ENCODE measurements at regions of chr1 and their contacts with region 1.

Region 1: GRCh38 chr1:198657550-198658064 is 18.8 kb downstream of the PTPRC start:
- DNase-seq: no peak
- H3K4me3 Mint-ChIP-seq: peak overlapping the region; percentile 65
- H3K27ac Mint-ChIP-seq: peak overlapping the region; percentile 81
- H3K4me1 Mint-ChIP-seq: peaks cover 71% of the 10 kb centered on the region
- H3K27me3 Mint-ChIP-seq: no peaks in the 10 kb centered on the region

Region 2: DNA sequence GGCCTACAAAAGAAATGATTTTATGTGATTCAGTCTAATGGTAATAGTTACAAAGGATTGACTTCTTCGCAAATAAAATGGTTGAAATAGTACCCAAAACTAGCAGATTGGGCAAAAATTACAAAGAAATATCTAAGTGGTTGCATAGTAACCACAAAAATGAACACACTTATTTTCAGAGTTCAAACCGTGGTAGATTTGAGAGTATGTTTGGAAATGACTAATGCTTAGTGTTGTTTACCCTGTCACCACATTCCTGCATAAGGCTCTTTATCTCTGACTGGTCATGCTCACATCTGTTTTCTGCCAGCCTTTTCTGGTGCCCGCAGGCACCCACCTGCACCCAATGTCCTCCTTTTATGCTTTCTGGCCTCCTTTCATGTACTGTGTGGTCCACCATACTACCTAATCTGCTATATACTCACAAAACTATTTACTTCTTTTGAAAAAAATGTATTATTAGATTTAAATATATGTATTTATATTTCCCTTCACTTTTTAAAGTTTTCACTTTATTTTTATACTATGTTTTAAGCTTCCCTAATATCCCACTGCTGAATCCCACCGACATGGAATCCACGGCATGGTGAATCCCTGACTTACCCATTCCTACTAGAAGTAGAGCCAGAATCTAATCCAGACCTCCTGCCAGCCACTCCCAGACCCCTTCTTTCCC is 11.6 kb after region 1 on chr1:
- CTCF ChIA-PET with region 1: interaction called, 5 read pairs
- POLR2A ChIA-PET with region 1: interaction called, 130 read pairs
- DNase-seq: peak; percentile 60
- H3K4me3 Mint-ChIP-seq: peak overlapping the region; percentile 41
- H3K27ac Mint-ChIP-seq: peak overlapping the region; percentile 87
- H3K4me1 Mint-ChIP-seq: peaks cover 88% of the 10 kb centered on the region
- H3K27me3 Mint-ChIP-seq: no peaks in the 10 kb centered on the region

Region 3: DNA sequence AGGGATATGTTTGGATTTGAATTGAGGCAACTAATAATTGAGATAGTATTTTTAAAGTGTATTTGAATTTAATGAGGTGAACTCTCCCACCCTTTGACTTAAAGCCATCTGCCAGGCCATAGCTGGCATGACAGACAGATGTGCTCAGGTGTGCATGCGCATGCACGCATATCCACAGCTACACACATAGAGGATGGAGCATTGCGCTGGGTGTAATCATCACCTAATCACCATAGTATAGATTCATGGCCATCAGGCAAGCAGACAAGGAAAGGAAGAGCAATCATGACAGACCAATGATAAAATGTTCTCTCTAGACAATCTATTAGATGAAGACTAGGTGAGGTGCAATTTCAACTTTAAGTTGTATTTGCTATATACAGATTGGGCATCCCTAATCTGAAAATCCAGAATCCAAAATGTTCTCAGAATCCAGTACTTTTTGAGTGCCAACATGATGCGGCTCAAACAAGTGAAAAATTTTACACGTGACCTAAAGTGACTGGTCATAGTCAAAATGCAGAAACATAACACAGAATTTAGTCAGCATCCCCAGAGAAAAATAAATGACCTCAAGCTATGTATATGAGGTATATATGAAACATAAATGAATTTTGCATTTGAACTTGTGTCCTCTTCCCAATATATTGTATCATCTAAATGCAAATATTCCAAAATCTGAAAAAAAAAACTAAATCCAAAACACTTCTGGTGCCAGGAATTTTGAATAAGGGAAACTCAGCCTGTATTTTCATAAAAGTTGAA is 51.3 kb after region 1 on chr1:
- CTCF ChIA-PET with region 1: no interaction called
- POLR2A ChIA-PET with region 1: no interaction called
- DNase-seq: no peak
- H3K4me3 Mint-ChIP-seq: no peak overlapping the region
- H3K27ac Mint-ChIP-seq: peak overlapping the region; percentile 47
- H3K4me1 Mint-ChIP-seq: peaks cover 39% of the 10 kb centered on the region
- H3K27me3 Mint-ChIP-seq: no peaks in the 10 kb centered on the region

Measured in activated CD4-positive, alpha-beta memory T cell treated with anti-CD3 and anti-CD28 coated beads, Interleukin-2, amount 10 ng/mL, durations not matched to agents 7 days and 5 days (primary cell).